Activated T-helper 1 cell treated with anti-CD3 and anti-CD28 coated beads, Interleukin-12 subunit alpha, Interleukin-12 subunit beta, Interleukin-2, Interleukin-4 antibody, amounts not matched to agents 30 ng/mL and 10 ng/mL and 1 ng/mL, durations not matched to agents 14 hours and 24 hours and 36 hours (primary cell): ENCODE measurements at regions of chr3 and their contacts with region 1.

Region 1: GRCh38 chr3:158434412-158435038 is 136.5 kb upstream of the MLF1 start:
- DNase-seq: peak; percentile 6
- H3K4me3 Mint-ChIP-seq: no peak overlapping the region
- H3K27ac Mint-ChIP-seq: no peak overlapping the region
- H3K4me1 Mint-ChIP-seq: no peaks in the 10 kb centered on the region
- H3K27me3 Mint-ChIP-seq: no peaks in the 10 kb centered on the region

Region 2: DNA sequence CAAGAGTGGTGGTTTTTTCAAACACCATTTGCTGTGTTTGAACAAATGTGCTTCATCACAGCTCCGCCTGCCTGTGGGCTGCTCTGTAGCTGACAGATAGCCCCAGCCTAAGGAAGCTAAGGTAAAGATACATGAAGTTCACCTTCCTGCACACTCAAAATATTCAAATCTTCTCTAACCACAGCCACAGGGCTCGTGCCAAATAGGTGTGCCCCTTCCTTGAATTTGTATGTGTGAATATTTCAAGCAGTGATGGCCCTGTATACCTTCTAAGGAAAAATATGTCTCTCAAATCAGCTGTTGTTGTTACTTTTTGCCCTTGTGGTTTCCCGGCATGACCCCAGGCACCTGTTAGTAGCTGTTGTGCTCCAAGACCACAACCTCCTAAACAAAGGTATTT is 1367.4 kb before region 1 on chr3:
- intact Hi-C with region 1: no loop called
- DNase-seq: peak; percentile 32
- H3K4me3 Mint-ChIP-seq: no peak overlapping the region
- H3K27ac Mint-ChIP-seq: no peak overlapping the region
- H3K4me1 Mint-ChIP-seq: peaks cover 36% of the 10 kb centered on the region
- H3K27me3 Mint-ChIP-seq: peaks cover 2% of the 10 kb centered on the region

Region 3: DNA sequence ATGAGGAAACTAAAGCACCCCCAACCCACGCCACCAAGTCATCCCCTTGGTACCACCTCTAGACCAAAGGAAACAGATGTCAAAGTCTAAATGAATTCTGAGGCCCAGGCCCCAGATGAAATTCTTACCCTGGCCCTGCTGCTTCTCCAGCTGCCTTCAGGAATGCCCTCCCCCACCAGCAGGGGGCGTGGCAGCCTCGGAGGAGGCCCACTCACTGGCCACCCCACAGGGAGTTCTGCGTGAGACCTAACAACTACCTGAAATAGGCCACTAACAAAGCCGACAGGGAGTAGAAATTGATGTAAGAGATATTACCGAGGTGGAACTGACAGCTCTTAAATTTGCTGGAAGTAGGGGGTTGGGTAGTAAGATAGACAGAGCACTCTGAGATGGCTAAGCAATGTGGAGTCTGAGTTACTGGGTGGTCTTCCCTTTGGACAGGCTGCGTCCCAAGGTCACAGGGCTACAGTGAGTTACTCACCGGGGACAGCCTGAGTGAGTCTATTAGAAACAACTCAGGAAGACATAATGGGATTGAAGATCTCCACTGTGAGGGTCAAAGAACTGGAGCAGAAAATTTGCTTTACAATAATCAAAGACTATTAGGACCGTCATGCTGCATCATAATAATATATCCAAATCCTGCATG is 569.0 kb before region 1 on chr3:
- intact Hi-C with region 1: loop called (anchors 5 kb)
- DNase-seq: peak; percentile 3
- H3K4me3 Mint-ChIP-seq: no peak overlapping the region
- H3K27ac Mint-ChIP-seq: no peak overlapping the region
- H3K4me1 Mint-ChIP-seq: no peaks in the 10 kb centered on the region
- H3K27me3 Mint-ChIP-seq: no peaks in the 10 kb centered on the region

Region 4: DNA sequence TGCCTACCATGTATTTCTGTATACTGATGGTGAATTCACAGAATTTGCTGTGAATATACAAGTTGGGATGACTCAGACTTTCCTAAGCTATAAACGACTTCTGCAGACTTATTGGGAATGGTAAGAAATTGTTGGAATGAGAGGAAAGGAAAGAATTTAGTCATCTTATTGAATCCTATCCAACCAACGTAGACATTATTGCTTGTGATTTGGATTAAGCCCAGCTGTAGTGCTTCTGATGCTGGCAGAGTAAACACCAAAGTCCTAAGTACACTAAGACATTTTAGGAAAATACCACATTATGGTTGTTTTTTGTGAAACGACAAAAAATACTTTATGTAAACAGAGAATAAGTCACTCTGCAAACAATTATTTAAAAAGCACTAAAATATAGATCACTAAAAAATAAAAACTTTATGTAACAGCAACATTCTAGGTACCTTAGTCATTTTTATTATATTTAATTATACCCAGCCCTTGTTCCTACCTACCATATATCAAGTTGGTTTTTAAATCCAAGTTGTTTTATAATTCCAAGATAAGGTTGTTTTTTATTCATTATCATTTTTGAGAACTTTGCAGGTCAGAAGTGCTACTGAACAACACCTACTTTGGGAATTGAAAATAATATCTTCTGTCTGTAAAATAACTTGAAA is 37.2 kb after region 1 on chr3:
- intact Hi-C with region 1: no loop called
- DNase-seq: no peak
- H3K4me3 Mint-ChIP-seq: no peak overlapping the region
- H3K27ac Mint-ChIP-seq: no peak overlapping the region
- H3K4me1 Mint-ChIP-seq: no peaks in the 10 kb centered on the region
- H3K27me3 Mint-ChIP-seq: no peaks in the 10 kb centered on the region